A549 (cell line): ENCODE measurements at regions of chr1 and their contacts with region 1.

Region 1: GRCh38 chr1:159891275-159892157 is 8.4 kb downstream of the CFAP45 start:
- DNase-seq: peak; percentile 82 to 90
- ATAC-seq: peak; percentile 95 to 99
- H3K4me3 ChIP-seq: no peak overlapping the region
- H3K27ac ChIP-seq: peak overlapping the region in 1 of 2 experiments; percentile 54; a peak in 1 of 6 replicates
- H3K4me1 ChIP-seq: peaks cover 11% of the 10 kb centered on the region; the same call in 2 of the 3 replicates
- CTCF ChIP-seq: peak; percentile 100
- EP300 ChIP-seq: no peak
- POLR2A ChIP-seq: no peak
- RAD21 ChIP-seq: peak; percentile 100

Region 2: DNA sequence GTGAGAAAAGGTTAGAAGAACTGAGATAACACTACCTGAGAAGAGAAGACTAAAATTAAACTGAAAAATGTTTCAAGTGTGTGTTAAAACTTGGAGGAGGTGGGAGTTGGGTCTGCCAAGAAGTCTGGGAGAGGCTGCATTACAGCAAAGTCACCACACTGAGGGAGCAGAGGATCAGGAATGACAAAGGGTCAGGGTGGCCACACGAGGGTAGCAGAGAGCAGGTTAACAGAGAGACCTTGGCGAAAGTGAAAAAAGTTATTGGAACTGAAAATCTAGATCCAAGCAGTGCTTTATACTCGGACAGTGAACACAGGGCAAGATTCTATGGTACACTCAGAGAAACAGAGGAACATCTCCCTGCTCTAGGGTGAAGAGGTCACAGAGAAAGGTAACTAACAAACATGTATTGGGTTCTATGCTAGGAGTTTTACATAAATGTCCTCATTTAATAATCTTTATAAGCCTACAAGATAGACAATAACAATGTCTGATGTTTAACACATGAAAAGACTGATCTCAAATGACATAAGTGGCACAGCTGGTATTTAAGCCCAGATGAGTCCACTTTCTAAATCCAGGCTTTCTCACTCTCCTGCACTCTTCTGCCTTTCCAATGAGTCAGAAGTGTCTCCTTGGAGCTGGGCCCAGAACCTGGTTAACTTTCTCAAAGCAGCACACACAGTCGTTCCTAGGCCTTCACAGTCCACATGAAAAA is 730.4 kb before region 1 on chr1:
- CTCF ChIA-PET with region 1: interaction called, 48 read pairs
- POLR2A ChIA-PET with region 1: no interaction called
- DNase-seq: peak; percentile 61 to 77
- ATAC-seq: peak; percentile 98 to 100
- H3K4me3 ChIP-seq: no peak overlapping the region
- H3K27ac ChIP-seq: 0 out of 6 replicates have a peak overlapping the region, but pooled peaks of 1 of the 2 experiments have one; percentile 31
- H3K4me1 ChIP-seq: peaks cover 8% of the 10 kb centered on the region
- CTCF ChIP-seq: peak; percentile 100
- EP300 ChIP-seq: no peak
- POLR2A ChIP-seq: no peak
- RAD21 ChIP-seq: peak; percentile 99 to 100

Region 3: DNA sequence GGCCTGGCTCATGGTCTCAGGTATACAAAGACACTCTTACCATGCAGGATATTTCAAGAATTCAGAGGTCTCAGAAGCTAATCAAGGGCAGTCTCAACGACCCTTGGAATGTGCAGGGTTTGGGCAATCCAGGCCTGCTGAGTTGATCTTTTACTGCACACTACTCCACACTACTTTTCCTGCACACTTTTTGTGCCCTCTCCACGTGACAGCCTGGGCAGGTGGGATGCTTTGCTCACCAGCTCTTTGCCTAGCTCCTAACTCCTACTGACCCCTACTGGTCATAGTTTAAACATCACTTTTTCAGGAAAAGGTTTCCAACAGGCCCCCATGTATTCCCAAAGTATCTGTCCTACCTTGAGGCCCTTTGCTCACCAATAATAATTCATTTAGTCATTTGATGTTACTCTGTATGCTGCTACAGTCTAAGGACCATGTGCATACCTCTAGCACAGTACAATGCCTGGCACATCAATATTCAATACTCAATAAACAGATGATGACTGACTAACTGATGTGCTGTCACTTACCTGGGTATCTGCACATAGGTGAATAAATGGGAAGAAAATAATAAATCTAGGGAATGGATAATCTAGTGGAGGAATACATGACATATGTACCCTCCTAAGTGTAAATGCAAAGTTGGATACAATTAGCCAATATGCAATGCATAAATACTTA is 101.1 kb before region 1 on chr1:
- CTCF ChIA-PET with region 1: interaction called, 565 read pairs
- POLR2A ChIA-PET with region 1: no interaction called
- DNase-seq: peak; percentile 36 to 55
- ATAC-seq: peak; percentile 42 to 80; a peak in 4 of 6 replicates
- H3K4me3 ChIP-seq: no peak overlapping the region
- H3K27ac ChIP-seq: no peak overlapping the region
- H3K4me1 ChIP-seq: no peaks in the 10 kb centered on the region
- CTCF ChIP-seq: peak; percentile 68
- EP300 ChIP-seq: no peak
- POLR2A ChIP-seq: no peak
- RAD21 ChIP-seq: peak; percentile 59 to 69

Region 4: GRCh38 chr1:159829273-159829634 is 62.3 kb before region 1 on chr1:
- CTCF ChIA-PET with region 1: interaction called, 31 read pairs
- POLR2A ChIA-PET with region 1: no interaction called
- DNase-seq: peak; percentile 22 to 43
- ATAC-seq: peak; percentile 85 to 95
- H3K4me3 ChIP-seq: no peak overlapping the region
- H3K27ac ChIP-seq: no peak overlapping the region
- H3K4me1 ChIP-seq: no peaks in the 10 kb centered on the region
- CTCF ChIP-seq: no peak; the same call in 2 of the 3 replicates
- EP300 ChIP-seq: no peak
- POLR2A ChIP-seq: no peak
- RAD21 ChIP-seq: peak in 1 of 2 experiments; percentile 17; a peak in 1 of 5 replicates

Region 5: GRCh38 chr1:159869173-159869572 is 22.3 kb before region 1 on chr1:
- CTCF ChIA-PET with region 1: interaction called, 62 read pairs
- POLR2A ChIA-PET with region 1: no interaction called
- DNase-seq: no peak
- ATAC-seq: peak in 1 of 2 experiments; percentile 42; a peak in 1 of 6 replicates
- H3K4me3 ChIP-seq: no peak overlapping the region
- H3K27ac ChIP-seq: peak overlapping the region in 1 of 2 experiments; percentile 32; a peak in 1 of 6 replicates
- H3K4me1 ChIP-seq: 0 out of 3 replicates have a peak, but pooled peaks cover 3% of the 10 kb centered on the region
- CTCF ChIP-seq: no peak
- EP300 ChIP-seq: no peak
- POLR2A ChIP-seq: no peak
- RAD21 ChIP-seq: no peak

Region 6: GRCh38 chr1:159936273-159936904 is 44.9 kb after region 1 on chr1:
- CTCF ChIA-PET with region 1: interaction called, 16 read pairs
- POLR2A ChIA-PET with region 1: no interaction called
- DNase-seq: peak; percentile 59 to 84
- ATAC-seq: peak; percentile 76 to 91
- H3K4me3 ChIP-seq: no peak overlapping the region
- H3K27ac ChIP-seq: peak overlapping the region in 1 of 2 experiments; percentile 43; a peak in 3 of 6 replicates
- H3K4me1 ChIP-seq: peaks cover 20% of the 10 kb centered on the region
- CTCF ChIP-seq: peak; percentile 89
- EP300 ChIP-seq: no peak
- POLR2A ChIP-seq: no peak
- RAD21 ChIP-seq: peak; percentile 90 to 93